CD4-positive, alpha-beta T cell (primary cell): ENCODE measurements at regions of chr19 and their contacts with region 1.

Region 1: GRCh38 chr19:1039646-1040475 is at the start of gene ABCA7:
- DNase-seq: peak; percentile 99 to 100 (median 99)
- ATAC-seq: peak; percentile 90
- H3K4me3 ChIP-seq: peak within 1 kb of the TSS; percentile 91
- H3K4me3 Mint-ChIP-seq: peak within 1 kb of the TSS; percentile 100
- H3K27ac ChIP-seq: peak within 1 kb of the TSS; percentile 43 to 51
- H3K27ac Mint-ChIP-seq: peak within 1 kb of the TSS; percentile 92
- H3K4me1 ChIP-seq: peaks cover 81% of the 10 kb centered on the region
- H3K4me1 Mint-ChIP-seq: peaks cover 51% of the 10 kb centered on the region
- H3K27me3 ChIP-seq: no peaks in the 10 kb centered on the region
- H3K27me3 Mint-ChIP-seq: no peaks in the 10 kb centered on the region
- CTCF ChIP-seq: no peak
- total RNA-seq, gene ABCA7: 114 to 118 TPM

Region 2: GRCh38 chr19:347946-348861 is 691.7 kb before region 1 on chr19:
- CTCF ChIA-PET with region 1: no interaction called
- POLR2A ChIA-PET with region 1: no interaction called
- intact Hi-C with region 1: no loop called
- DNase-seq: no peak
- ATAC-seq: no peak
- H3K4me3 ChIP-seq: no peak overlapping the region
- H3K4me3 Mint-ChIP-seq: no peak overlapping the region
- H3K27ac ChIP-seq: no peak overlapping the region
- H3K27ac Mint-ChIP-seq: no peak overlapping the region
- H3K4me1 ChIP-seq: peaks cover 17% of the 10 kb centered on the region
- H3K4me1 Mint-ChIP-seq: peaks cover 17% of the 10 kb centered on the region
- H3K27me3 ChIP-seq: no peaks in the 10 kb centered on the region
- H3K27me3 Mint-ChIP-seq: no peaks in the 10 kb centered on the region
- CTCF ChIP-seq: no peak

Region 3: DNA sequence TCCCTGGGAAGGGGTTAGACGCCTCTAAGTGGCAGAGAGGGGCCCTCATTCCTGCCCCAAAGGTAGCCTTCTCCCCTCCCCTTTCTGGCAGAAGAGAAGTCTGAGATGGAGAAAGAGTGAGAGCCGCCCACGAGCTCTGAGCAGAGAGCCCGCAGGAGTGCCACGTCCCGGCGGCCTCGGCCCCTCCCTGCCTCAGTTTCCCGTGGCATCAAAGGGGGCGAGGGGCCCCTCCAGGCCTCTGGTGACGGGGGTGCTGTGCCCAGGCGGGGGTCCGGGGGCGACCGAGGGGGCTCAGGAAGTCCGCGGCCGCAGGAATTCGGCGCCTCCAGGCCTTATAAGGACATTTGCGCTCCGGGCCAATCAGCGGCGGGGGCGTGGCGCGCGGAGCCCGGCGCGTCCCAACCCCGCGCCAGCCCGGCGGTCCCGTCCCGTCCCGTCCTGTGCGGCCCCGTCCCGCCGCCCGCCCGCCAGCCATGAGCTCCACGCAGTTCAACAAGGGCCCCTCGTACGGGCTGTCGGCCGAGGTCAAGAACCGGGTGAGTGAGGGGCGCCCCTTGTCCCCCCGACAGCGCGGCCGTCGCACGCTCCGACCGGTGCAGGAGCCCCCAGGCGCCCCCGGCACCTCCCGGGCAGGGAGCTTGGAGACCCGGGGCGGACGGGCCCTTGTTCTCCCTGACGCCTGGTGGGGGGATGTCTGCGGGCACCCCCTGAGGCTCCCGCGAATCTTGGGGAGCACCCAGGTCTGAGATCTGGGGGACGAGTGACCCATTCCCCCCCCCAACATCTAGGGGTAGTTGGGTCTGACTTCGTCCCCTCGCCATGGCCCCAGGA is 13.5 kb before region 1 on chr19 and contains the start of gene CNN2:
- CTCF ChIA-PET with region 1: interaction called, 20 read pairs
- POLR2A ChIA-PET with region 1: interaction called, 203 read pairs
- intact Hi-C with region 1: loop called (anchors 1 to 2 kb)
- DNase-seq: peak in 11 of 14 experiments; percentile 47 to 83 (median 66)
- ATAC-seq: peak; percentile 16
- H3K4me3 ChIP-seq: peak within 1 kb of the TSS; percentile 99
- H3K4me3 Mint-ChIP-seq: peak within 1 kb of the TSS; percentile 99
- H3K27ac ChIP-seq: peak within 1 kb of the TSS; percentile 73 to 85
- H3K27ac Mint-ChIP-seq: peak within 1 kb of the TSS; percentile 93
- H3K4me1 ChIP-seq: peaks cover 50% of the 10 kb centered on the region
- H3K4me1 Mint-ChIP-seq: peaks cover 24% of the 10 kb centered on the region
- H3K27me3 ChIP-seq: no peaks in the 10 kb centered on the region
- H3K27me3 Mint-ChIP-seq: peaks cover 3% of the 10 kb centered on the region
- CTCF ChIP-seq: no peak
- total RNA-seq, gene CNN2: 307 to 318 TPM

Region 4: DNA sequence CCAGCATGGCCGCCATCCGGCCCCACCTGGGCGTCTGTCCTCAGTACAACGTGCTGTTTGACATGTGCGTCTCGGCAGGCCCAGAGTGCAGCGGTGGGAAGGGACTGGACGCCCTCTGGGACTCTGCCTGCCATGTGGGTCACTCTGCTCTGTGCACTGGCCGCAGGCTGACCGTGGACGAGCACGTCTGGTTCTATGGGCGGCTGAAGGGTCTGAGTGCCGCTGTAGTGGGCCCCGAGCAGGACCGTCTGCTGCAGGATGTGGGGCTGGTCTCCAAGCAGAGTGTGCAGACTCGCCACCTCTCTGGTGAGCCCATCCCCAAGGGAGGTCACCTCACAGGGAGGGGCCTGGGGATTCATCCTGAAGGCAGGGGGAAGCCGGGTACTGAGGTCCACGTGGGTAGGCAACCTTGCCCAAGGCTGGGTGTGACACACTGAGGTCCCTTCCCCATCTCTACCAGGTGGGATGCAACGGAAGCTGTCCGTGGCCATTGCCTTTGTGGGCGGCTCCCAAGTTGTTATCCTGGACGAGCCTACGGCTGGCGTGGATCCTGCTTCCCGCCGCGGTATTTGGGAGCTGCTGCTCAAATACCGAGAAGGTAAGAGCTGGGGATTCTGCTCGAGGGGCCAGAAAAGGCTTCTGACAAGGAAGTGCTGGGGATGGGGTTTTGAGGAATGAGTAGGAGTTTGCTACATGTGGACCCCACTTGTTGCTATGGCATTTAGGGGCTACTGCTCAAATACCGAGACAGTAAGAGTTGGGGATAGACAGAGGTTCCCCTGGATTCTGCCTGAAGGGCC is 11.3 kb after region 1 on chr19:
- CTCF ChIA-PET with region 1: no interaction called
- POLR2A ChIA-PET with region 1: interaction called, 12 read pairs
- intact Hi-C with region 1: no loop called
- DNase-seq: no peak
- ATAC-seq: no peak
- H3K4me3 ChIP-seq: no peak overlapping the region
- H3K4me3 Mint-ChIP-seq: no peak overlapping the region
- H3K27ac ChIP-seq: no peak overlapping the region
- H3K27ac Mint-ChIP-seq: no peak overlapping the region
- H3K4me1 ChIP-seq: peaks cover 26% of the 10 kb centered on the region
- H3K4me1 Mint-ChIP-seq: peaks cover 8% of the 10 kb centered on the region
- H3K27me3 ChIP-seq: no peaks in the 10 kb centered on the region
- H3K27me3 Mint-ChIP-seq: no peaks in the 10 kb centered on the region
- CTCF ChIP-seq: no peak